ENCODE measurements at regions of chr17 and their contacts with region 1.

Region 1: GRCh38 chr17:50783193-50783660 is 15.9 kb upstream of the ANKRD40CL start:
- DNase-seq: peak; percentile 97
- H3K4me3 ChIP-seq: no peak overlapping the region
- H3K27ac ChIP-seq: no peak overlapping the region
- H3K4me1 ChIP-seq: no peaks in the 10 kb centered on the region
- H3K27me3 ChIP-seq: no peaks in the 10 kb centered on the region
- CTCF ChIP-seq: peak; percentile 100
- EP300 ChIP-seq: no peak
- RAD21 ChIP-seq: peak; percentile 100

Region 2: DNA sequence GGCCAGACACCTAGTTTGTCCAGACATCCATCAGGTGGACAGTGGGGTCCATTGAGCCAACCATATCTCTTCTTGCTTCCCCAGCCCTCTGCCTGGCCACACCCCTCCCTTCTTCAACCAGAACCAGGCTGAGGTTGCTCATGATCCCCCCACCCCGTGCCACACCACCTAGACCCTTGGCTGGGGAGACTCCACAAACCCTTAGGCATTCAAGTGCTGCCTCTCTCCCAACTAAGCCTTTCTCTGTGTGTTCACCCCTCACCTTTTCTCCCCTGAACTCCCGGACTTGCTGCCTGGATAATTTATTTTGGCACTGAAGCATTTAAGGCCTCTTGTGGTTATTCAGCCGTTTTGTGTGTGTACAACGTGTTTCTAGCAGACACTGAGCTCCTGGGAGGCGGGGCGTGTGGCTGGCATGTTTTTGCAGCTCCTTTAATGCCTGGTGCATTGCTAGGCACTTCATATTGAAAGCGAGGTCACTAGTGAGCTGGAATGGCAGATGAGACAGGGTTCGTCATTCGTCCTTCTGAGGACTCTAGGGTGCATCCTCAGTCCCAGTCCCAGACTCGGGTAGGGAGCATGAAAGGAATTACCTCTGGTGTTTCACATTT is 194.0 kb before region 1 on chr17:
- CTCF ChIA-PET with region 1: no interaction called
- POLR2A ChIA-PET with region 1: no interaction called
- DNase-seq: no peak
- H3K4me3 ChIP-seq: no peak overlapping the region
- H3K27ac ChIP-seq: no peak overlapping the region
- H3K4me1 ChIP-seq: peaks cover 0 to 69% of the 10 kb centered on the region in 2 experiments; a peak in 2 of 4 replicates
- H3K27me3 ChIP-seq: peaks cover 12% of the 10 kb centered on the region; the same call in 1 of the 2 replicates
- CTCF ChIP-seq: no peak
- EP300 ChIP-seq: no peak
- RAD21 ChIP-seq: no peak

Region 3: DNA sequence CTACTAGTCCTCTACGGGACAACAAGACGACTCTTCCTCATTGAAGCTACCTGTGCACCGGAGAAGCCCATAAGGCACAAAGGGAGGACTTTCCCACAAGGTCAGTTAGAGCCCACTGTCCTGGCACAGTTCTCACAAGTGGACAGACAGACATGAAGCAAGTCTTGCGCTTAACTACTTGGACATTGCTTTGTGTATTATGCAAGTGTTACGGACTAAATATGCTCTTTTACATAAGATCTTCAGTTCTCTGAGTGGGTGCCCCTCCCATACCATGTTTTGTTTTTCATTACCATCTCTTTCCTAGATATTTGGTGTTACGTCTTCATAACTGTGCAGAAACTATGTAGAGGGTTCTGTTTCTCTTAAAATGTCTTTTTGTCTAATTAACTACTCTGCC is 34.0 kb before region 1 on chr17:
- CTCF ChIA-PET with region 1: interaction called, 15 read pairs
- POLR2A ChIA-PET with region 1: no interaction called
- DNase-seq: no peak
- H3K4me3 ChIP-seq: no peak overlapping the region
- H3K27ac ChIP-seq: no peak overlapping the region; a peak in 1 of 4 replicates
- H3K4me1 ChIP-seq: no peaks in the 10 kb centered on the region; a peak in 2 of 4 replicates
- H3K27me3 ChIP-seq: no peaks in the 10 kb centered on the region
- CTCF ChIP-seq: no peak
- EP300 ChIP-seq: no peak
- RAD21 ChIP-seq: no peak

Region 4: DNA sequence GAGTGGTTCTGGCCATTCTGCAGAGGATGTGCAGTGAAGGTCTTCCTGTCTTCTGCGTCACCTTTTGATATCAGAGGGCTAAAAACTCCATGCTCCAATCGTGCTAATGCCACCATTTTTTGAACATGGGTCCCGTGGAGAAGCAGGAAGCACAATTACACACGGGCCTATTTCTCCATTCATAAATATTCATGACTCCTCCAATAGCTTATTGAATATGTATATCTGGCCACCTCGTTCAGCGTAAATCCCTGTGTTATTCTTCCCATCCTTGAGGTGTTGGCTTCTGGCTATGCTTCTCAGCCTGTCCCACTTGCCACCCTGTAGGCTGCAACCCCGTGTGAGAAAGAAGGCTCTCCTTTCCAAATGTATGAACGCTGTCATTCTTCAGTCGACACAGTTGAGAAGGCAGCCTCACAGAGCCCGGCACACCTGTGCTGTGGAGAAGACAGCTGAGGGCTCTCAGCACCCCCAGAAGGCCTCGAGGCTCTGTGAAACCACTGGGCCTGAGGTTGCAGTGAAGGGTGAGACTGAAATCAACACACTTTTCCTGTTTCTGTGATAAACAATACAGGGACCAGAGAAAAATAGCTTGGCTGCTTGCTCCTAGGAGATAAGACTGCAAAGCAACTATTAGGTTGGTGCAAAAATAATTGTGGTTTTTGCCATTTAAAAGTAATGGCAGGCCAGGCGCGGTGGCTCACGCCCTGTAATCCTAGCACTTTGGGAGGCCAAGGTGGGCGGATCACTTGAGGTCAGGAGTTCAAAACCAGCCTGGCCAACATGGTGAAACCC is 11.0 kb before region 1 on chr17:
- CTCF ChIA-PET with region 1: interaction called, 95 read pairs
- POLR2A ChIA-PET with region 1: no interaction called
- DNase-seq: no peak
- H3K4me3 ChIP-seq: no peak overlapping the region
- H3K27ac ChIP-seq: no peak overlapping the region
- H3K4me1 ChIP-seq: no peaks in the 10 kb centered on the region; a peak in 1 of 4 replicates
- H3K27me3 ChIP-seq: no peaks in the 10 kb centered on the region
- CTCF ChIP-seq: no peak
- EP300 ChIP-seq: no peak
- RAD21 ChIP-seq: no peak

Region 5: DNA sequence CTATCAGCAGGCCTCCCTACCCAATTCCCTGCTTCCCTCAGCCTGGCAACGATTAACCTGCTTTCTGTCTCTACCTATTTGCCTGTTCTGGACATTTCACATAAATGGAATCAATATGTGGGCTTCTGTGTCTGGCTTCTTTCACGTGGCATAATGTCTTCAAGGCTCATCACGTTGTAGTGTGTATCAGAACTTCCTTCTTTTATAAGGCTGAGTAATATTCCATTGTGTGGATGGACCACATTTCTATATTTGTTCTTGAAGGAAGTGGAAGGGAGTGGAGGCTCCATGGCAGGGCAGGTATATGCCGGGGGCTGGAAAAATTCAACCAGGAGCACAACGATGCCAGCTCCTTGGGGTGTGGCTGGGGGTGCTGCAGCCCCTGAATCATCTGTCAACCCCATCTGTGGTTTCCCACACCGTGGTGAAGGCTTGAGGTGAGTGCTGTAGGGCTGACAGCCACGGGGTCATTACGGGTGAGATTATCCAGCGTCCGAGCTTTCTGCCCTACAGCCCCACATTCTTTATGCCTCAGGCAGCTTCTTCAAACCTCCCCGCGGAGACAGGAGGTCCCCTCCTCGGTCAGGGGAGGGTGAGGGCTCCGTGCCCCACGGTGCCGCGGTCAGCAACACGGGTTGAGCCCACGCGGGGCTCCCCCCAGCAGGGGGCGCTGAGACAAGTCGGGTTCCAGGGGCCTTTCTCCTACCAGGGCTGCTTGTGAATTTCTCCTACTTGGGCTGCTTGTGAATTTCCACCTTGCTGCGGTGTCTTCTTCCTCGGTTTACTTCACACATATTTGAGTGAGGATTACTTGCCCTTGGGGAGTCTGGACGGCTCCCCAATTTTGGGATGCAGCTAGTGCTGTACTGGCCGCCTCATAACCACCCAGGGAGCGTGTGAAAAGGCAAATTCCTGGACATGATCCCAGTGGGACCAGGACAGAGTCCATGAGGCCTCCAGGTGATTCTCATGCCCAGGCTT is 33.8 kb after region 1 on chr17:
- CTCF ChIA-PET with region 1: interaction called, 71 read pairs
- POLR2A ChIA-PET with region 1: no interaction called
- DNase-seq: peak; percentile 84
- H3K4me3 ChIP-seq: no peak overlapping the region; a peak in 1 of 4 replicates
- H3K27ac ChIP-seq: no peak overlapping the region
- H3K4me1 ChIP-seq: no peaks in the 10 kb centered on the region; a peak in 1 of 4 replicates
- H3K27me3 ChIP-seq: peaks cover 4% of the 10 kb centered on the region; the same call in 1 of the 2 replicates
- CTCF ChIP-seq: peak; percentile 82
- EP300 ChIP-seq: no peak
- RAD21 ChIP-seq: peak; percentile 44

Region 6: GRCh38 chr17:50841949-50842354 is 58.7 kb after region 1 on chr17:
- CTCF ChIA-PET with region 1: interaction called, 520 read pairs
- POLR2A ChIA-PET with region 1: interaction called, 3 read pairs
- DNase-seq: peak; percentile 97
- H3K4me3 ChIP-seq: no peak overlapping the region; a peak in 1 of 4 replicates
- H3K27ac ChIP-seq: no peak overlapping the region
- H3K4me1 ChIP-seq: peaks cover 3 to 5% of the 10 kb centered on the region in 2 experiments; a peak in 2 of 4 replicates
- H3K27me3 ChIP-seq: no peaks in the 10 kb centered on the region
- CTCF ChIP-seq: peak; percentile 94
- EP300 ChIP-seq: no peak
- RAD21 ChIP-seq: peak; percentile 93

Region 7: DNA sequence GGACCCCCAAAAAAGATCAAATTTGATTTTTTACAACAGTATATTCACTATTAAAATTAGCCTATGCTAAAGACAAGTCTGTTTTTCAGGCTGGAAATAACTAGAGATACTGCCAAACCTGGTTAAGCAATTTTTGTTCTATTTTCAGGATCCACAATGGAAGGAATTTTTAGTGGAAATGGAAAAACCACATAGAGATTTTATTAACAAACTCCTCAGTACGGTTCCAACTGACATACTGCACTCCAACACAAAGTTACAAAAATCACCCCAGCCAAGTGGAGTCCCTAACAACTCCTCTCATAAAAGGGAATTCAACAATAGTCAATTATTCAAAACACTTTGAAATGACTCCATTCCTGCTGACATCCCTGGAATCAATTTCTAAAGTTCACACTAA is 184.6 kb after region 1 on chr17:
- CTCF ChIA-PET with region 1: interaction called, 10 read pairs
- POLR2A ChIA-PET with region 1: no interaction called
- DNase-seq: no peak
- H3K4me3 ChIP-seq: no peak overlapping the region
- H3K27ac ChIP-seq: no peak overlapping the region
- H3K4me1 ChIP-seq: peaks cover 0 to 12% of the 10 kb centered on the region in 2 experiments; a peak in 2 of 4 replicates
- H3K27me3 ChIP-seq: no peaks in the 10 kb centered on the region
- CTCF ChIP-seq: no peak
- EP300 ChIP-seq: no peak
- RAD21 ChIP-seq: no peak

Region 8: GRCh38 chr17:51056813-51057510 is 273.7 kb after region 1 on chr17:
- CTCF ChIA-PET with region 1: interaction called, 14 read pairs
- POLR2A ChIA-PET with region 1: no interaction called
- DNase-seq: peak; percentile 49
- H3K4me3 ChIP-seq: peak overlapping the region in 1 of 2 experiments; percentile 5; a peak in 1 of 4 replicates
- H3K27ac ChIP-seq: peak overlapping the region; percentile 51 to 78
- H3K4me1 ChIP-seq: peaks cover 6 to 10% of the 10 kb centered on the region in 2 experiments; a peak in 3 of 4 replicates
- H3K27me3 ChIP-seq: no peaks in the 10 kb centered on the region
- CTCF ChIP-seq: peak; percentile 98
- EP300 ChIP-seq: 0 out of 4 replicates have a peak, but pooled peaks of 1 of the 2 experiments have one; percentile 6
- RAD21 ChIP-seq: peak; percentile 94

Region 9: DNA sequence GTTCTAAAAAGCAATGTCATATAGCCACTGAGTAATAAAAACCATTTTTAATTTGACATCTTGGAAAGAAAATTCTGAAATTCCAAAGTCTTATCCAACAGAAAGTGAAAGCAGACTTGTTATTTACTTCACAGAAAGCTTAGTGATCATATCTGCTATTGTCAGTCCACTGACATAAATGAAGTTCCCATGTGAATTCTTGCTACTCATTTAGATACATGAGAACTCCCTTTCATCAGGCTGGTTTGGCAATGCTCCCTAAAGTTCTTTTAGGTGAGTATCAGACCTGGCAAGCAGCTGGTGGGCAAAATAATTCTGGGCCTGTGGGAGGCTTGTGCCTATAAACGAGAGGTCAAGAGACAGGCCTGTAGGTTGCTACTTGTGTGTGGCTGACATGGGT is 406.4 kb after region 1 on chr17:
- CTCF ChIA-PET with region 1: no interaction called
- POLR2A ChIA-PET with region 1: no interaction called
- DNase-seq: no peak
- H3K4me3 ChIP-seq: no peak overlapping the region
- H3K27ac ChIP-seq: no peak overlapping the region
- H3K4me1 ChIP-seq: peaks cover 0 to 6% of the 10 kb centered on the region in 2 experiments; a peak in 2 of 4 replicates
- H3K27me3 ChIP-seq: no peaks in the 10 kb centered on the region
- CTCF ChIP-seq: no peak
- EP300 ChIP-seq: no peak
- RAD21 ChIP-seq: no peak